ENCODE measurements at regions of chr14 and their contacts with region 1.

Region 1: DNA sequence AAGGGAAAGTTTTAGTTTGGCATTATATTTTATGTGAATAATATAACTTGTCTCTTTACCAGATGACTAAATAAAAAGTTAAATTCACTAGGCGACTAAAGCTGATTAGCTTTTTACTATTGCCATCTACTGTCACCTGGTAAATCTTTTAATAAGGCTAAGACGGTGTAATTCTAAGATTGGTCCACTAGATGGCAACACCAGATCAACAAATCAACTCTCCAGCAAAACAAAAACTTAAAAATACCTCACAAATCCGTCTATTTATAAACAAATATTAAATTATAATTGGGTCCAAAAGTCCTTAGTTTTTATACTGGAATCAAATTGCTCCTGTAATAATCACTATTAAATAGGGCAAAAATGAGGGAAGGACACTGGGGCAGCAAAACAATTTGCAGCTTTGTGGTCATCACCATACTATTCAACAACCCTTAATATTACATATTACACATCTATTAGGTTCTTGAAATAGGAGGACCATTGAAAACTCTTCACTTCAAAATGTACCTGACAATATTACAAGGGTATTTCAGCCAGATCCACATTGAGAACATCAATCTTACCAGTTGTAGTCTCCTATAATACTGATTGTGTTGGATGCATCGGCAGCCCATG is 47.9 kb downstream of the GALC start:
- DNase-seq: peak; percentile 64
- H3K4me3 ChIP-seq: no peak overlapping the region
- H3K27ac ChIP-seq: no peak overlapping the region
- H3K4me1 ChIP-seq: no peaks in the 10 kb centered on the region
- H3K27me3 ChIP-seq: no peaks in the 10 kb centered on the region
- CTCF ChIP-seq: peak; percentile 19 to 43
- POLR2A ChIP-seq: no peak

Region 2: GRCh38 chr14:87600240-87600639 is 344.9 kb before region 1 on chr14:
- CTCF ChIA-PET with region 1: no interaction called
- POLR2A ChIA-PET with region 1: no interaction called
- dilution Hi-C with region 1: no loop called
- intact Hi-C with region 1: no loop called
- DNase-seq: no peak
- H3K4me3 ChIP-seq: no peak overlapping the region
- H3K27ac ChIP-seq: no peak overlapping the region
- H3K4me1 ChIP-seq: no peaks in the 10 kb centered on the region
- H3K27me3 ChIP-seq: no peaks in the 10 kb centered on the region
- CTCF ChIP-seq: no peak
- POLR2A ChIP-seq: no peak

Region 3: GRCh38 chr14:87992718-87993628 is 47.9 kb after region 1 on chr14 and contains the start of gene GALC:
- CTCF ChIA-PET with region 1: interaction called, 10 read pairs
- POLR2A ChIA-PET with region 1: no interaction called
- dilution Hi-C with region 1: no loop called
- intact Hi-C with region 1: no loop called
- DNase-seq: peak; percentile 94
- H3K4me3 ChIP-seq: peak within 1 kb of the TSS; percentile 73 to 82 (median 74)
- H3K27ac ChIP-seq: peak within 1 kb of the TSS; percentile 58
- H3K4me1 ChIP-seq: peaks cover 12% of the 10 kb centered on the region
- H3K27me3 ChIP-seq: no peaks in the 10 kb centered on the region
- CTCF ChIP-seq: no peak
- POLR2A ChIP-seq: peak; percentile 76
- total RNA-seq, gene GALC: 14.2 and 15.0 TPM in 2 replicates

Region 4: GRCh38 chr14:88168498-88169165 is 223.5 kb after region 1 on chr14:
- CTCF ChIA-PET with region 1: interaction called, 41 read pairs
- POLR2A ChIA-PET with region 1: no interaction called
- dilution Hi-C with region 1: no loop called
- intact Hi-C with region 1: loop called (anchors 1 kb)
- DNase-seq: peak; percentile 30
- H3K4me3 ChIP-seq: no peak overlapping the region
- H3K27ac ChIP-seq: no peak overlapping the region
- H3K4me1 ChIP-seq: no peaks in the 10 kb centered on the region
- H3K27me3 ChIP-seq: no peaks in the 10 kb centered on the region
- CTCF ChIP-seq: peak; percentile 70 to 81
- POLR2A ChIP-seq: no peak

Region 5: DNA sequence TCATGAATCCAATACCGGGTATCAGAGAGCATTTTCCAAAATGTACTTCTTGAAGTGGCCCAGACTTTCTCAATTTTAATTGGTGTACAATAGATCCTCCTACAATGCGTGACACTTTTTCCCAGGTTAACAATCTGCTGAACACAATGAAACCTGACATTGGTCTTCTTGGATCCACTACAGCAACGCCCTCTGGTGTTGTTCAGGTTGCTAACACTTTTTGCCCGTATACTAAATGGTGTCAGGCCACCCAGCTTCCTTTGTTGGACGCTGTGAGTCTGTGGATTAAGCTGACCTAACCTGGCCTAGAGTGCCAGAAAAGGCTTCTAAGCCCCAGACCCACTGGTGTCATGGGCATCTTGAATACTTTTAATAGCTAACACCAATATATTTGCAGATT is 288.8 kb after region 1 on chr14:
- CTCF ChIA-PET with region 1: interaction called, 3 read pairs
- POLR2A ChIA-PET with region 1: no interaction called
- dilution Hi-C with region 1: no loop called
- intact Hi-C with region 1: loop called (anchors 1 kb)
- DNase-seq: peak; percentile 9
- H3K4me3 ChIP-seq: no peak overlapping the region
- H3K27ac ChIP-seq: no peak overlapping the region
- H3K4me1 ChIP-seq: no peaks in the 10 kb centered on the region
- H3K27me3 ChIP-seq: no peaks in the 10 kb centered on the region
- CTCF ChIP-seq: peak in 1 of 2 donors; percentile 18
- POLR2A ChIP-seq: no peak

Region 6: GRCh38 chr14:88562831-88563686 is 618.0 kb after region 1 on chr14 and contains the start of gene ZC3H14:
- CTCF ChIA-PET with region 1: interaction called, 5 read pairs
- POLR2A ChIA-PET with region 1: no interaction called
- dilution Hi-C with region 1: no loop called
- intact Hi-C with region 1: loop called (anchors 5 kb)
- DNase-seq: peak; percentile 93
- H3K4me3 ChIP-seq: peak within 1 kb of the TSS; percentile 77 to 96 (median 86)
- H3K27ac ChIP-seq: peak within 1 kb of the TSS; percentile 72
- H3K4me1 ChIP-seq: peaks cover 14% of the 10 kb centered on the region
- H3K27me3 ChIP-seq: no peaks in the 10 kb centered on the region
- CTCF ChIP-seq: no peak
- POLR2A ChIP-seq: peak; percentile 83
- total RNA-seq, gene ZC3H14: 59.6 and 61.8 TPM in 2 replicates

Measured in endothelial cell of umbilical vein (primary cell).